Lower leg skin (tissue), 4 donors: ENCODE measurements at regions of chr12 and their contacts with region 1.

Region 1: GRCh38 chr12:15151161-15152120 is 69.8 kb downstream of the RERG start:
- DNase-seq: no peak
- H3K4me3 ChIP-seq: no peak overlapping the region
- CTCF ChIP-seq: no peak
- POLR2A ChIP-seq: no peak

Region 2: DNA sequence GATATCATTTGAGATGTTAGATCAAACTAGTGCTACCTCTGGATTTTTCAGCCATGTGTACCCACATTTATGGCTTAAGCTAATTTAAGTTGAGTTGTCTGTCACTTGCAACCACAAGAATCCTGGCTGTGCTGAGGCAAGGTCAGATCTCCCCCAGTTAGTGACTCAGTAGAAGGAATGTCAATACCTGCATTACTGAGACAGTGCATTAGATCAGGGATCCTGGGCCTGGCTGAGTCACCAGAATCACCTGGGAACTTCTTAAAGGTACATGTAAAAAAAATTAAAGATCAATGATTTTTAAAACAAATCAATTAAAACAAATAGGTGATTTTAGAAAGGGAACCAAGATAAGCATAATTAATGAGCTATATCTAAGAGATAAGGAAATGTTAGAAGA is 1085.4 kb before region 1 on chr12:
- intact Hi-C with region 1: no loop called
- DNase-seq: no peak
- H3K4me3 ChIP-seq: no peak overlapping the region
- CTCF ChIP-seq: no peak
- POLR2A ChIP-seq: no peak

Region 3: GRCh38 chr12:15088105-15088504 is 63.3 kb before region 1 on chr12:
- intact Hi-C with region 1: no loop called
- DNase-seq: no peak
- H3K4me3 ChIP-seq: no peak overlapping the region
- CTCF ChIP-seq: no peak
- POLR2A ChIP-seq: no peak

Region 4: DNA sequence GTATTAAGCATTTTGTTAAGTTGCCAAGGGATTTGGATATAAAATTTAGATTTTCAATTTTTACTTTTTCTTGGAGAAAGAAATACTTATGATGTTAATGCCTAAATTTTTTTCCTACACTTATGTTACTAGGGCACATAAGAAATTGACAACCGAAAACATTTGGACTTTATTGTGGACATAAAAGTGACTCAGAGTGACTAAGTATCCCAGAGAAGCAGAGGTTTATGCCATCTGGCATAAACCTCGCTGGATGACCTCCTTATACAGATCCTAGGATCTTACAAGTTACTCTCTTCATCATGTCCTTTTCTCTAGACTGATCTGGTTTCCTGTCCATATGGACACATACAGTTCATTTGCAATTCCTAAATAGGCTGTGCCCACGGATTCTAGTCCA is 20.0 kb before region 1 on chr12:
- intact Hi-C with region 1: no loop called
- DNase-seq: no peak
- H3K4me3 ChIP-seq: no peak overlapping the region
- CTCF ChIP-seq: no peak
- POLR2A ChIP-seq: no peak

Region 5: DNA sequence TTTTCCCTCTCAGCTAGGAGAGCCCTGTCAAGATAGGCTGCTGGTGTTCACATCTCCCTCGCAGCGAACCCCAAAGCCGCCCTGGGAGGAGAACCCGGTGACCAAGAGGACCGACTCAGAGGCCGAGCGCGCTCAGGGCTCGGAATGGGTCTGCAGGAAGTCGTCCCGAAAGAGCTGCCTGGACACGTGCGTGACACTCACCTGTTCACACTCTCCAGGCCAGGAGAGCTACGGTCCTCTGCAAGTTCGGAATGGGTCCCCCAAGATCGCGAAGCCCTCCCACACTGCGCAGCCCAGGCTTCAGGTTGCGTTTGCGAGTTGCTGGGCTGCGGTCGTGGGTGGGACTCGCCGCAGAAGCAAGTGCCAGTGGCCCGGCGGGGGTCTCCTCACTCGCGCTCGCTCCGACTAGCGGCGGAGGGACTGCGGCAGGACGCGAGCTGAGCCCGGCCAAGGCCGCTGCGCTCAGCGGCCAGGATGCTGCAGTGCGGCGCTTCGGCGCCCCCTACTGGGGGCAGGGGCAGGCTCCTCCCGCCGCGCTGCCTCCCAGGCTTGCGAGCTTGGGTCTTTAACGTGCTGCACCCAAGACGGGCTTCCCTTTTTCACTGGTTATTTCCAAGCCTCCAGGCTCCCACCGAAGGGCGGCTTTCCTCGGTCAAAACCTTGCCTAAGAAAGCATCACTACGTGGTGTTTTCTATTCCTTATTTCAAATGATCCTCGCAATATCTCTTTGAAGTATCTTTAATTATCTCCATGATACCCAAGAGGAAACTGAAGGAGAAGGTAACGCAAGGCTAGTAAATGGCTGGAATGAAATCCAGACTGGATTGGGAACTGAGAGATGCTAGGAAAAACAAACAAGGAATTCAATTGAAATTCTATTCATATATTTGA is 69.8 kb after region 1 on chr12 and contains the start of gene RERG:
- intact Hi-C with region 1: loop called (anchors 5 kb)
- DNase-seq: peak; percentile 65 to 95
- H3K4me3 ChIP-seq: peak within 1 kb of the TSS; percentile 30
- CTCF ChIP-seq: peak in 1 of 3 donors; percentile 83
- POLR2A ChIP-seq: no peak
- total RNA-seq, gene RERG: 2.9 to 16.5 (median 11.4) TPM

Region 6: DNA sequence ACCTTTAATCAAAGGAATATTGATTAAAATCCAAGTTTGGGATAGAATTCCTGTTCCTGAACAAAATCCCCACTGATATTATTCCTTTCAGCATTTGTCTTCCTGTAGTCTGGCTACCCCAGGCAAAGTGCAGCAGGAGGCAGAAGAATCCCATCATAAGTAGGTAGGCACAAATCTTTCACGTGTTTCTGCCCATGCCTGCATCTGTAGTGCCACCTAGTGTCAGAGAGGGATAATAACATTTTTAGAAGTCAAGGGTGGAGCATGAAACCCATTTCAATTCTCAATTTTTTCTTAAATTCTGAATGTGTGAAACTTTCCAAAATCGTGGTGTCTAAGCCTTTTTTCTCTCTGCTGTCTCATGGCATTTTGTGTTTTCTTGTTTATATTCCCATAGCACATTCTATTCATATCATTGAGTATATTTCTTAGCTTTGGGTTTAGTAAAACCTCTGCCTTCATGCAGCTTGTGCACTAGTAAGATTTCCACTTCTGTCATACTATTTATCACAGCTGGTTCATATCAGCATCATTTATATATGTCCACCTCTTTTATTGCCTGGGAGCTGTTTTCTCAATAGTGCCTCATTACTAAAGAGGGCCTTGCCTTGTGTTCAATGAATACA is 117.6 kb after region 1 on chr12:
- intact Hi-C with region 1: loop called (anchors 5 kb)
- DNase-seq: peak in 1 of 2 donors; percentile 33
- H3K4me3 ChIP-seq: no peak overlapping the region
- CTCF ChIP-seq: no peak
- POLR2A ChIP-seq: no peak